Activated naive CD4-positive, alpha-beta T cell treated with anti-CD3 and anti-CD28 coated beads, Interleukin-2, amount 10 ng/mL, durations not matched to agents 7 days and 5 days (primary cell): ENCODE measurements at regions of chr18 and their contacts with region 1.

Region 1: DNA sequence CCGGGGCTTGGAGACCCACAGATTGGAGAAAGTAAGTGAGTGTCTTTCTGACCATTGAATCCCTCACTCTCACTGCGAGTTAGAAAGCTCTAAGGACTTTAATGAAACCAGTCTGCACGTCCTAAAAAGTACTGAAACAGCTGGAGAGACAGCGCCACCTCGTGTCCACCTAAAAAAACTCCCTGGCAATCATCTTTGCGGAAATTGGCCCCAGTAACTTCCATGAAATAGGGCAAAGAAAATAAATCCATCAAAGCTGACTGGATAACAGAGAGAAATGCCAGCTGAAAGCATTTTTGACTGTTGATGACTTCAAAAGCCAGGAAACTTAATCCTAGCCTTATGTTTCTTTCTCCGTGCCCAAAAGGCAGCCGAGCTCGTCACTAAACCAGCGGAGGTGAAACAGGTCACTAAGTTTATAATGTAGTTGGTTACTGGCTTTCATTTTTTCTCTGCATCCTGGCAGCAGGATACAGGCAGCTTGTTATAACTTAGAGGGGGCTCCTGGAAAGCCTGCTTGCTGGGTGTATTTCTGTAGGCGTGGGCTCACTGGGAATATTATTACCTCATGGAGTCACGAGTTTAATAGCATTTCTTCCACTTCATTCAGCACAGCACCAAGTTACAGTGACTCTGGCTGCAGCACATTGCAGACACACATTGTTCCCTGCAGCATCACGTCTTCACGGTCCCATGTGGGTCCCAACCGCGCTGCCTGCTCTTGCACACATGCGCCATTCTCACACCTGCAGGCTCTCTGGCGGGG is 266.5 kb downstream of the HRH4 start:
- DNase-seq: peak; percentile 71
- H3K4me3 Mint-ChIP-seq: no peak overlapping the region
- H3K27ac Mint-ChIP-seq: no peak overlapping the region
- H3K4me1 Mint-ChIP-seq: no peaks in the 10 kb centered on the region
- H3K27me3 Mint-ChIP-seq: no peaks in the 10 kb centered on the region

Region 2: DNA sequence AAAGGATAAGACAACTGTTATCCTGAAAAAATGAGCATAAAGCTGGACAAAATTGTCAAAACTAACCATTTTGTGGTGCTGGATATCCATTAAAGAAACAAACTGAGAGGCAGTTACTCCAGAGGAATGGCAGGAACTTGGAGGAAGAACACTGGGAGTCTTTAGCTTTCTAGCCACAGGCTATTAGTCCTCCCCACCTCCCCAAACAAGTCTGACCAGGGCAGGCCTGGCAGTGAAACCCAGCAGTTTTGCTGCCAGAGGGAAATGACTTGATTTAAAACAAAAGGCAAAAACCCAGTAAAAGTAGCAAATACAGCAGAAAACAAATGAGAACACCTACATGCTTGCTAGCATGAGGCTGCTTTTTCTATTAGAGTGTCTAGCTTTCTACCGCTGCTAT is 364.2 kb before region 1 on chr18:
- CTCF ChIA-PET with region 1: interaction called, 10 read pairs
- DNase-seq: no peak
- H3K4me3 Mint-ChIP-seq: no peak overlapping the region
- H3K27ac Mint-ChIP-seq: no peak overlapping the region
- H3K4me1 Mint-ChIP-seq: no peaks in the 10 kb centered on the region
- H3K27me3 Mint-ChIP-seq: no peaks in the 10 kb centered on the region

Region 3: DNA sequence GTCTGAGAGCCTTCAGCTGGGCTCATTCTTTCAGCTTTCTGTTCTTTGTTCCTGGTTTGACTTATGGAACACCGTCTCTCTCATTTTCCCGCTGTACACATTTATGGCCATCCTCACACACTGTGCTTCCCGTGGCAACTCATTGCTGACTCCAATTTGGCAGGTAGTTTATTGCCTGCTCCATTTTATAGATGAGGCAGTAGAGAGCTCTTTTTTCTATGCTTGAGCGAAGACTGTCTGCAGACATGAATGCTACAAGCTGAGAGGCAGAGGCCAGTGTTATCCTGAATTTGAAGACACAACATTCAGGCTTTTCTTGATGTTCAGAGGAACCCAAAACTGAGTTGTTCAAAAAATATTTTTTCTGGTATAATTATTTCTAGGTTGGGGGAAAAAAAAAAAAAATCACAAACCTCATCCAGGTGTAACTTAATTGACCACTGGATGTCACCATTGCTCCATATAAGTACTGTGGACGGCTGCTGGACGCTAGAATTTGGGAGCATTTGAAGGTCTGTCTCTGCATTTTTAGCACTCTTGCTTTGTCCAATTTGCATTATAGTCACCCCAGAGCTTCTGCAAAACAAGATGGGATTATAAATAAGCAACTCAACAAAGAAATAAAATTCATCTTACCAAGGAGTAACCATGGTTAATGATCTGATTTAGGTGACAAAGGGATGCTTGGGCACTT is 183.0 kb before region 1 on chr18:
- CTCF ChIA-PET with region 1: interaction called, 13 read pairs
- DNase-seq: no peak
- H3K4me3 Mint-ChIP-seq: no peak overlapping the region
- H3K27ac Mint-ChIP-seq: no peak overlapping the region
- H3K4me1 Mint-ChIP-seq: no peaks in the 10 kb centered on the region
- H3K27me3 Mint-ChIP-seq: no peaks in the 10 kb centered on the region

Region 4: DNA sequence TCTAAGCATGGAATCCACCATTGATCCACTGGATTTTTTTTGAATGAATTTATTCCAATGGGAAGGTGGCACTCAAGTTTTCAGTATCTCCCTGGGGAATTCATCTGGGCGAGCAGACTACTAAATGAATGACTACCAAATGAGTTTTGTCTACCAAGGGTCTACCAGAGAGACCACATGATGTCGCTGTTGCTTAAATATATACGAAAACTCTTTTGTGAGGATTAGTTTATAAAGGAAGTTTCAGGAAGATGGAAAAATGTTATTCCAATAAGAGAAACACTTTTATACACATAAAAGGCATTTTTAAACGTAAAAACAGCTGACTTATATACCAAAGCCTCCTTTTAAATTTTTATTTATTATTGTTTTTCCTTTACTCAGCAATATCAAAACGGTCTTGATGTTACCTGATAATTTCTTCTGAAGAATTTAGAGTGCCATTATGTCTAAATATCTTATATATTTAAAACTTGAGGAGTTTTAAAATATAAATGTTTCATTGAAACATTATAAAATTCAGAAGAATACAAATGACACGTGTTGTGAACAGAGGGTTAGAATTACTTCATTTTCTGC is 126.7 kb before region 1 on chr18:
- CTCF ChIA-PET with region 1: interaction called, 41 read pairs
- DNase-seq: no peak
- H3K4me3 Mint-ChIP-seq: no peak overlapping the region
- H3K27ac Mint-ChIP-seq: no peak overlapping the region
- H3K4me1 Mint-ChIP-seq: no peaks in the 10 kb centered on the region
- H3K27me3 Mint-ChIP-seq: peaks cover 3% of the 10 kb centered on the region